Common myeloid progenitor, CD34-positive (primary cell): ENCODE measurements at regions of chr6 and their contacts with region 1.

Region 1: DNA sequence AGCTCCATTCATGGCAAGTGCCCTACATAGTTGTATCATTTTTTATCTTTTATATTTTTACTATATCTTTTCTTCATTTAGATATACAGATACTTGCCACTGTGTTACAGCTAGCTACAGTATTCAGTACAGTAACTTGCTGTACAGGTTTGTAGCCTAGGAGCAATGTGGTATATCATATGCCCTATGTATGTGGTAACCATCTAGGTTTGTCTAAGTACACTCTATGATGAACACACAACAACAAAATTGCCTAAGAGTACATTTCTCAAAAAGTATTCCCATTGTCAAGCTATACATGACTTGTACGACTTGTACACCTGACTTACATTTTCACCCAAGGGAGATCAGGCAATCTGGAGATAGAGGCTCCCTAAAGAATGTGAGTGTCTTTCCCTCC is 8.2 kb downstream of the ELOVL5 start:
- DNase-seq: no peak
- H3K4me3 ChIP-seq: no peak overlapping the region
- H3K27ac ChIP-seq: no peak overlapping the region
- H3K4me1 ChIP-seq: peaks cover 16 to 54% (median 20%) of the 10 kb centered on the region in 4 experiments
- H3K27me3 ChIP-seq: no peaks in the 10 kb centered on the region

Region 2: GRCh38 chr6:53330137-53330536 is 10.4 kb before region 1 on chr6:
- CTCF ChIA-PET with region 1: interaction called, 21 read pairs
- POLR2A ChIA-PET with region 1: no interaction called
- DNase-seq: no peak
- H3K4me3 ChIP-seq: no peak overlapping the region
- H3K27ac ChIP-seq: no peak overlapping the region
- H3K4me1 ChIP-seq: peaks cover 14 to 33% (median 16%) of the 10 kb centered on the region in 4 experiments
- H3K27me3 ChIP-seq: no peaks in the 10 kb centered on the region